ENCODE measurements at regions of chr22 and their contacts with region 1.

Region 1: GRCh38 chr22:31661851-31662656 is at the start of gene PISD:
- DNase-seq: peak; percentile 98 to 99
- H3K4me3 ChIP-seq: peak within 1 kb of the TSS; percentile 79
- H3K27ac ChIP-seq: peak within 1 kb of the TSS; percentile 98
- H3K4me1 ChIP-seq: peaks cover 28% of the 10 kb centered on the region
- H3K27me3 ChIP-seq: no peaks in the 10 kb centered on the region
- CTCF ChIP-seq: no peak
- total RNA-seq, gene PISD: 46.4 and 46.8 TPM in 2 replicates

Region 2: DNA sequence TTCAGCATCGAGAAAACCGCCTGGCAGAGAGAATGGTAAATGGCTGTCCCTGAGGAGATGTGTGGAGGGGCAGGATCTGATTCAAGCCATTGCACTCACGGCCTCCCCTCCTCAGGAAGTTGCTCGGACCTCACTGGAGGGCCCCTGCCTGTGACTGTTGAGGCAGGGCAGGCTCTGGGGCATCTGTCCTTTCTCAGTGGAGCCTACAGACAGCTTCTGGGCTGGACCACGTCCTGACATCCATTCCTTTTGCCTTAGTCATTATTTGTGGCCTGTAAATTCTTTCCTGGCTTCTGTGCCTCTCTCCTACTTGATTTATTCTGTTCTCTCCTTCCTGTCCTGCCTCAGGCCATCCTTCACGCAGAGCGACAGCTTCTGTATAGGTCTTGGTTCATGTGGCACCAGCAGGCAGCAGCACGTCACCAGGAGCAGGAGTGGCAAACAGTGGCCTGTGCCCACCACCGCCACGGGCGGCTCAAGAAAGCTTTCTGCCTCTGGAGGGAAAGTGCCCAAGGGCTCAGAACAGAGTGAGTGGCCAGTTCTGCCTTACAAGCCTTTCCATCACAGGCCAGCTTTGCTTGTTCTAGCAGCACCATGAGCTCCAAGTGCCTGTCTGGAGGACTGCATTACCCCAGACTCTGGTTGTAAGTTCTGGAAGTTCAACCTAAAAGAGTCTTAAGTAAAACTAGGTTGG is 59.6 kb before region 1 on chr22:
- CTCF ChIA-PET with region 1: interaction called, 10 read pairs
- POLR2A ChIA-PET with region 1: no interaction called
- intact Hi-C with region 1: loop called (anchors 5 kb)
- DNase-seq: peak; percentile 73 to 90
- H3K4me3 ChIP-seq: no peak overlapping the region
- H3K27ac ChIP-seq: peak overlapping the region; percentile 30
- H3K4me1 ChIP-seq: peaks cover 19% of the 10 kb centered on the region
- H3K27me3 ChIP-seq: no peaks in the 10 kb centered on the region
- CTCF ChIP-seq: no peak

Region 3: GRCh38 chr22:31637938-31638618 is 24.0 kb before region 1 on chr22:
- CTCF ChIA-PET with region 1: interaction called, 3 read pairs
- POLR2A ChIA-PET with region 1: interaction called, 6 read pairs
- intact Hi-C with region 1: loop called (anchors 2 kb)
- DNase-seq: peak in 1 of 2 experiments; percentile 34
- H3K4me3 ChIP-seq: no peak overlapping the region
- H3K27ac ChIP-seq: no peak overlapping the region
- H3K4me1 ChIP-seq: peaks cover 41% of the 10 kb centered on the region
- H3K27me3 ChIP-seq: no peaks in the 10 kb centered on the region
- CTCF ChIP-seq: no peak

Region 4: DNA sequence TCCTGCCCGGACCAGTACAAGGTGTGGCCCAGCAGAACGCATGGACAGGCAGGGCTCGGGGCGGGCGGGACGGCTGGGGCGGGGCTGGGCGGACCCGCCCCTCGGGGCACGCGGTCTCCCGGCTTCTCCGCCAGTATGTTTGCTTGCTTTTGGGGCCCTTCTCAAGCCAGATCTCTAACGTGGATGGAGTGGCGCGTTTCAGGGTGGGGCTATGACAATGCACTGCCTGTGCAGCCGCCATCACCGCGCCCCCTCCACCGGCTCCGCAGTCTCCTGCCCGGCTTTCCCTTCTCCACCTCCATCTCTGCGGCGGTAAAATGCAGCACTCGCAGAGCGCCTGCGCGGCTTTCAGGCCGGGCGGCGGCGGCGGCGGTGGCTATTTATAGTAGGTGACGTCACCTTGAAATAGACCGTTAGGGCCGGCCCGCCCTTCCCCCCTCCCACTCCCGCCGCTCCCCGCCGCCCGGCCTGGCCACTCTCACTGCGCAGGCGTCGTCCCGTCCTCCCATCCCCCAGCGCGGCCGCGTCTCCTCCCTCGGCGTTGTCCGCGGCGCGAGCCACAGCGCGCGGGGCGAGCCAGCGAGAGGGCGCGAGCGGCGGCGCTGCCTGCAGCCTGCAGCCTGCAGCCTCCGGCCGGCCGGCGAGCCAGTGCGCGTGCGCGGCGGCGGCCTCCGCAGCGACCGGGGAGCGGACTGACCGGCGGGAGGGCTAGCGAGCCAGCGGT is 282.1 kb after region 1 on chr22 and contains the start of gene YWHAH:
- CTCF ChIA-PET with region 1: interaction called, 8 read pairs
- POLR2A ChIA-PET with region 1: no interaction called
- intact Hi-C with region 1: loop called (anchors 5 kb)
- DNase-seq: peak; percentile 76 to 95
- H3K4me3 ChIP-seq: peak within 1 kb of the TSS; percentile 99
- H3K27ac ChIP-seq: peak within 1 kb of the TSS; percentile 53
- H3K4me1 ChIP-seq: peaks cover 20% of the 10 kb centered on the region
- H3K27me3 ChIP-seq: no peaks in the 10 kb centered on the region
- CTCF ChIP-seq: no peak
- total RNA-seq, gene YWHAH: 131 and 132 TPM in 2 replicates

Region 5: DNA sequence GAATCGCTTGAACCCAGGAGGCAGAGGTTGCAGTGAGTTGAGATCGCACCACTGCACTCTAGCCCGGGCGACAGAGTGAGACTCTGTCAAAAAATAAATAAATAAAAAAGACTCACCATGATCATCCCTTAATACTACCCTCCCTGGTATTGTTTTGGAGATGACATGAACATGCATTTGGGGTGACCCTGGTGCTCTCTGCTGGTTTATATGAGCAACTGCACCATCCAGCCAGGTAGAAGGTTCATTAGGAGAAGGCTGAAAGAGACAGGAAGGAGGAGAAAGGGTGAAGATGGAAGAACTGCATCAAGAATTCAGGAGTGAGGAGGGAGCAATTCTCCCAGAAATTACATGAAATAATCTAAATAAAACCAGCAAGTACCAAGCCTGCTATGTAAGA is 418.9 kb after region 1 on chr22:
- CTCF ChIA-PET with region 1: no interaction called
- POLR2A ChIA-PET with region 1: no interaction called
- intact Hi-C with region 1: loop called (anchors 10 kb)
- DNase-seq: peak; percentile 20 to 54
- H3K4me3 ChIP-seq: no peak overlapping the region
- H3K27ac ChIP-seq: no peak overlapping the region
- H3K4me1 ChIP-seq: peaks cover 11% of the 10 kb centered on the region
- H3K27me3 ChIP-seq: no peaks in the 10 kb centered on the region; the same call in 1 of the 2 replicates
- CTCF ChIP-seq: peak; percentile 94

Region 6: DNA sequence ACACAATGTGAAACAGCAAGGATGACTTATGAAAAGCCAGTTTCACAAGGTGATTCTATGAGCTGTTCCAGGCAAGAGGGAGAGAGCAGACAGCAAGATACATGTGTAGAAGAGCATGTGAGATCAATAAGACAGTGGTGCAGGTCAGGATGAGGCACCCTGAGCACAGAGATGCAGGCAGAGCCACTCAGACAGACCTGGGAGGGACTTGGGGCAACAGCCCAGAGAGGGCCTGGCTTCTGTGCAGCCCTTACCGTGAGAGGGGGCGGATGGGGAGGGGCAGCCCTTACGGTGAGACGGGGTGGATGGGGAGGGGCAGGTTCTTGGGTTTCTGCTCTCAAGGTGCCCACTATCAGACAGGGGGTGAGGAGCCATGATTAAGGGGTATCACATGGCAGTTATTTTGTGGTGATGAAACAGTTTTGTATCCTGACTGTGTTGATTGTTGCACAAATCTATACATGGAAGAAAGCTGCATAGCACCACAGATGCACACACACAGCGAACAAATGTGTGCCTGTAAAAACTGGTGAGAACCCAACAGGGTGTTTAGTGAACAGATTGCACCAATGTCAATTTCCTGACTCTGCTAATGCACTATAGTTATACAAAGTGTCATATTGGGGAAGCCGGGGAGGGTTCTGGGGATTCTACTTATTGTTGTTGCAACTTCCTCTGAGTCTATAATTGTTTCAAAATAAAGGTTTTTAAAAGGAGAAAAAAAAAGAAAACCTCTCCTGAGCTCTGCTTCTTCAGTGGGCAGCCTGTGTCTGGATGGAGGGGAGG is 502.2 kb after region 1 on chr22:
- CTCF ChIA-PET with region 1: no interaction called
- POLR2A ChIA-PET with region 1: no interaction called
- intact Hi-C with region 1: no loop called
- DNase-seq: no peak
- H3K4me3 ChIP-seq: no peak overlapping the region
- H3K27ac ChIP-seq: no peak overlapping the region
- H3K4me1 ChIP-seq: no peaks in the 10 kb centered on the region
- H3K27me3 ChIP-seq: peaks cover 91% of the 10 kb centered on the region
- CTCF ChIP-seq: no peak

Measured in PC-9 (cell line).